ENCODE measurements at regions of chr13 and their contacts with region 1.

Region 1: DNA sequence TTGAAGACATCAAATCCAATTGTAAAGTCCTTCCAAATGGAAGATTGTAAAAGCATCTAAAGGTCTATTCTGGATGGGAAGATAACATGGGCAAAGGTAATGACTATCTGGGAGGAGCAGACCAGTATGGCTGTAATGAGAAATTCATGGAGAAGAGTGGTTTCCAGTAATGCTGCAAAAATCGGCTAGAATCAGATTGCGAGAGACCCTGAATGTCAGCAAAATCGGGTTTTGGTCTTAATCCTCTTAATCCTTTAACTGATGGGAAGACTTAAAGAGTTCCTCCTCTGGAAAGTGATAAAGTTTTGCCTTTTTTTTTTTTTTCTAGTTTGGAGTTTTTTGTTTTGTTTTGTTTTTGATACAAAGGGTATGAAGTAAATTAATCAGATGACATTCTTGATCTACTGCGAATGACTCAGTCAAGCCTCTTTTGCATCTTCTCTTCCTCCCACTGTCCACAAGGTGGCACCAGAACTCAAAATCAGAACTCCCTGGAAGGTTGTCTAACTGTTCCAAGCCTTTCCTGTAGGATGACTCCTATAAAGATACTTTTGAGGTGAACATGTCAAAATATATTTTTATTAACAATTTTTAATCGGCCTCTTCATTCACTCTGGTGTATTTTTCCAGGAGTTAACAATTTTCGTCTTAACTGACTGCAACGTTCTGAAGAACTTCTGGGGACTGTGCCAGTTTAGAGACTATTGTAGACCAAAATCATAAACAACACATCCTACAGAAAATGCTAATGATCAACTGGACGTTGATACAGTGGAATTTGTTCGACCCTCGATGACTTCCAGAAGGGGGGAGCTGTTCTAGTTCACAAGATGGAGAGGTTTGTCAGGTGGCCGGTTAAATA is 213.3 kb upstream of the MIR17HG start:
- DNase-seq: peak; percentile 28
- CTCF ChIP-seq: peak; percentile 70

Region 2: GRCh38 chr13:90683711-90684131 is 450.5 kb before region 1 on chr13:
- in situ Hi-C with region 1: no loop called
- DNase-seq: no peak
- CTCF ChIP-seq: no peak

Region 3: DNA sequence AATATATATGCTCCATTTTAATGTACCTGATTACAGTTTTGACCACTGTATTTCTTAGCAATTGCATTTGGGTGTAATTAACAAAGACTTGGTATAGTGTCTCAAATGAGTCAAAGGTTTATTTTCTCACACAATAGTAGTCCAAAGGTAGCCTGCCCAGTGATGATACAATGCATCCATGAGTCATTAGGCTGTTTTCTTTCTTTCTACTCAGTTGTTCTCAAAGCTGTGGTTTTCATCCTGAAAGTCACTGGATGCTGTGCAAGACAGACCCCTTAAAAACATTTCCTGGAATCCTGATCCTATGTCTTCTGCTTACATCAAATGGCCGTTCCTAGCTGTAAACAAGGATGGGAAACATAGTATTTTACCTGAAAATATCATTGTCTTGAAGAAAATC is 437.9 kb before region 1 on chr13:
- in situ Hi-C with region 1: no loop called
- DNase-seq: no peak
- CTCF ChIP-seq: no peak

Region 4: DNA sequence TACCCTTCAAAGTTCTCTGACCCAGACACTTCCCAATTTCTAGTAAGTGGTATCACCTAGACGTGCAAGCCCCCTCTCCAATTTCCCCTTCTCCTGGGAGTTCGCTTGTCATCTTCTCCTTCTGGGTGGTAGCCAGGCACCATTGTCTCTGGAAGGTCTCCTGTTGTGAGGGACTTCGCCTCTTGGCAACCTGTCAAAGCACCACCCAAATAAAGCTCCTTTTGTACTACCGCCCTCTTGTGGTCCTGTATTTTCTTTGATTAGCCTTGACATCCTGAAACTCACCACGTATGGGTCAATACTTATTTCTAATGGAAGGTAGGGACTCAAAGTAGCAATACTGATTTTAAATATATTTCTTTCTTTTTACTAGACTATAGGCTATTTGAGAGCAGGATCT is 272.4 kb after region 1 on chr13:
- in situ Hi-C with region 1: loop called (anchors 25 kb)
- DNase-seq: peak; percentile 47
- CTCF ChIP-seq: peak; percentile 57